ENCODE measurements at regions of chr5 and their contacts with region 1.

Region 1: GRCh38 chr5:19928562-19929421 is 59.2 kb downstream of the CDH18 start:
- DNase-seq: no peak
- H3K4me3 ChIP-seq: no peak overlapping the region
- H3K4me3 Mint-ChIP-seq: no peak overlapping the region
- H3K27ac Mint-ChIP-seq: peak overlapping the region; percentile 33
- H3K4me1 ChIP-seq: peaks cover 27% of the 10 kb centered on the region
- H3K4me1 Mint-ChIP-seq: peaks cover 19% of the 10 kb centered on the region
- H3K27me3 ChIP-seq: no peaks in the 10 kb centered on the region
- H3K27me3 Mint-ChIP-seq: no peaks in the 10 kb centered on the region
- CTCF ChIP-seq: no peak

Region 2: DNA sequence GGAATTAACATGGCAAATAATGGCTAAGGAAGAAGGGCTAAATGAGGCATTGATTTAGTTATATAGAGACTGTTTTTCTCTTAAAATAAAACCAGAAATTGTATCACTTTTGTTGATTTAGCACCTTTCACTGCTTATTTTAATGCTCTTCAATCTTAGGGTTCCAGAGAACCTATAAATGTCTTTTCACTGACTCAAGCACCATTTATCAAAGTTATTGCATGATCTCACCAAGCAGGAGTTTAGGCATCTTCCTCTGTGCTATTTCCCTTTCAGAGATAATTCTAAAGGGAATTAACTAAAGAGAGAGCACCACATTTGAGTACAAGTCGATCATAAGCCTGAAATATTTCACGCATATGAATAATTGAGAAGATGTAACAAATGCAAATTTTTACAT is 297.9 kb before region 1 on chr5:
- CTCF ChIA-PET with region 1: no interaction called
- POLR2A ChIA-PET with region 1: no interaction called
- intact Hi-C with region 1: no loop called
- DNase-seq: no peak
- H3K4me3 ChIP-seq: no peak overlapping the region
- H3K4me3 Mint-ChIP-seq: no peak overlapping the region
- H3K27ac Mint-ChIP-seq: no peak overlapping the region
- H3K4me1 ChIP-seq: no peaks in the 10 kb centered on the region
- H3K4me1 Mint-ChIP-seq: no peaks in the 10 kb centered on the region
- H3K27me3 ChIP-seq: no peaks in the 10 kb centered on the region
- H3K27me3 Mint-ChIP-seq: peaks cover 3% of the 10 kb centered on the region
- CTCF ChIP-seq: no peak

Region 3: GRCh38 chr5:19891611-19892010 is 37.2 kb before region 1 on chr5:
- CTCF ChIA-PET with region 1: no interaction called
- POLR2A ChIA-PET with region 1: no interaction called
- intact Hi-C with region 1: loop called (anchors 5 kb)
- DNase-seq: no peak
- H3K4me3 ChIP-seq: no peak overlapping the region
- H3K4me3 Mint-ChIP-seq: no peak overlapping the region
- H3K27ac Mint-ChIP-seq: no peak overlapping the region
- H3K4me1 ChIP-seq: peaks cover 27% of the 10 kb centered on the region
- H3K4me1 Mint-ChIP-seq: peaks cover 21% of the 10 kb centered on the region
- H3K27me3 ChIP-seq: no peaks in the 10 kb centered on the region
- H3K27me3 Mint-ChIP-seq: no peaks in the 10 kb centered on the region
- CTCF ChIP-seq: no peak